Calu3 (cell line): ENCODE measurements at regions of chr3 and their contacts with region 1.

Region 1: GRCh38 chr3:150314248-150315004 is 93.7 kb upstream of the TSC22D2 start:
- DNase-seq: peak; percentile 84
- H3K4me3 Mint-ChIP-seq: peak overlapping the region; percentile 38
- H3K27ac Mint-ChIP-seq: peak overlapping the region; percentile 90
- H3K4me1 Mint-ChIP-seq: peaks cover 81% of the 10 kb centered on the region
- H3K27me3 Mint-ChIP-seq: no peaks in the 10 kb centered on the region
- CTCF ChIP-seq: no peak

Region 2: DNA sequence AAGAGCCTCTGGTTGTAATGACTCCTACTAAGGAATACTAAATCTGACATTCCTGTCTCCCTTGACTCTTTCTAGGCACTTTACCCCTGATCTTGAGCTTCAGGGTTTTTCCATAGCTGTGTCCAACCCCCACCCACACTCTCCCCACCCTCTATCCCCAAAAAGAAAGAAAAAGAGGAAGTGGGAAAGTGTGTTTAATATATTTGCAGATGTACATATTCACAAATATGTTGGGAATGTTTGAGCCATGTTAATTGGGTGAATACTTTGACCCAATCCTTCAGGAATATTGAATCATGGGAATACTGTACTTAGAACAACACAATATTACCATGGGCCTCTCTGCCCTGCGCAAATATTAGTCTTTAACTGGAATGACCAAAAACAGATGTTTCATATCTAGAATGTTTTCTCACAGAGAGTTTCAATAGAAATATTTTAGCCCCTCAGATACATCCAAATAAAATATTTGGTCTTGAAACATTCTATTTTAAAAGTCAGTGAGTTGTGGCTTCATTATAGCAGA is 323.9 kb before region 1 on chr3:
- CTCF ChIA-PET with region 1: no interaction called
- intact Hi-C with region 1: no loop called
- DNase-seq: no peak
- H3K4me3 Mint-ChIP-seq: no peak overlapping the region
- H3K27ac Mint-ChIP-seq: no peak overlapping the region
- H3K4me1 Mint-ChIP-seq: no peaks in the 10 kb centered on the region
- H3K27me3 Mint-ChIP-seq: no peaks in the 10 kb centered on the region
- CTCF ChIP-seq: no peak

Region 3: DNA sequence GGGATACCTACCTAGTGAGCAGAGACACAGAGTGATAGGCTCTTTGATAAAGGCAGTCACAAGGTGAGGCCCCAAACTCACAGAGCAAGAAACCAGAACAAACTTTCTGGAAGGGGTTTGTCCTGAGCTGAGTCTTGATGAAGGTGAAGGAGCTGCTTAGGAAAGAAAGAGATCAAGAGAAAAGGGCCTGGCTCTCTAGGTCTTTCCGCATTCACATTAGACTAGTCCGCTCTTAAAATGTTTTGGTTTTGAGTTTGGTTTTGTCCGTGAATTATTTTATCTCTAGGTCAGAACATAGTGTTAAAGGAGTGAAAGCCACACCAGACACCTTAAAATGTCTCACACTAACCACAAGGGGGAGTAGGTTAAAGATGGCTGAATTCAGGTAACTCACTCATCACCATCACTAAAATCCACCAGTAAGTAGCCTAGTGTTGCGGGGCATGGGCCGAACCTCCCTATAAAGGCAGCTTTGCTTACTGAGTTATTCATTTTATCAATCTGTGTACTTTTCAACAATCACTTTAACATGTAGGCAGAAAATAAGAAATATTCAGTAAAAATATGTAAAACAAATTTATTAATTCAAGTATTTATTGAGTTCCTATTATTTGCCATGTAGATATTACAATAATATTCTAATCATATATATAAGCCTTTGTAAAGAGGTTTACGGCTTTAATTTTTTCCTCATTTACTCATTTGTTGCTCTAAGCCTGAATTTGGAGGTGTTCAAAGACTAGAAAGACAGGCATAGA is 27.9 kb before region 1 on chr3:
- CTCF ChIA-PET with region 1: interaction called, 10 read pairs
- intact Hi-C with region 1: no loop called
- DNase-seq: peak; percentile 45
- H3K4me3 Mint-ChIP-seq: no peak overlapping the region
- H3K27ac Mint-ChIP-seq: no peak overlapping the region
- H3K4me1 Mint-ChIP-seq: peaks cover 7% of the 10 kb centered on the region
- H3K27me3 Mint-ChIP-seq: no peaks in the 10 kb centered on the region
- CTCF ChIP-seq: peak; percentile 69

Region 4: DNA sequence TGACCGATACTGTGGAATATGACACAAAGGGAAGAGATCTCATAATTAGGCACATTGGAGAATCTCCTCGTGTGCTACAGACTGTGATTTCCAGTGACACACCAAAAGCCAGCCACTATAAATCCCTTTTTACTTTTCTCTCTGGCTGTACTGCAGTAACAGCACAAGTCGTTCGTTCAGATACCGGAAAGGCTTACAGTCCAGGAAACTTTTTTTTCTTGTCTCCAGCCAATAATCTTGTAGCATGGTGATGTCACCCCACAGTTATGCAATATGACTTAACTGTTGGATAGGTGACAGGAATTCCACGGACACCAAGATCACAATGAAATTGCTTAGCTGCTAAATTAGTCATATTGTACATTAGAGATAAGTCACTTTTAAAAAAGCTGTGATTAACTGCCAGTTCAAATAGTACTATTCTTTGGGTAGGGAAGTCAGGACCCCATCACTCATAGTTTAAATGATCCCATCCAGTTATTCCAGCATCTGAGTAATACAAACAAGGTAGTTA is 57.4 kb after region 1 on chr3:
- CTCF ChIA-PET with region 1: interaction called, 7 read pairs
- intact Hi-C with region 1: loop called (anchors 2 kb)
- DNase-seq: peak; percentile 91
- H3K4me3 Mint-ChIP-seq: peak overlapping the region; percentile 62
- H3K27ac Mint-ChIP-seq: peak overlapping the region; percentile 94
- H3K4me1 Mint-ChIP-seq: peaks cover 63% of the 10 kb centered on the region
- H3K27me3 Mint-ChIP-seq: no peaks in the 10 kb centered on the region
- CTCF ChIP-seq: no peak

Region 5: GRCh38 chr3:150775091-150775501 is 460.7 kb after region 1 on chr3:
- CTCF ChIA-PET with region 1: no interaction called
- intact Hi-C with region 1: no loop called
- DNase-seq: no peak
- H3K4me3 Mint-ChIP-seq: no peak overlapping the region
- H3K27ac Mint-ChIP-seq: no peak overlapping the region
- H3K4me1 Mint-ChIP-seq: peaks cover 15% of the 10 kb centered on the region
- H3K27me3 Mint-ChIP-seq: no peaks in the 10 kb centered on the region
- CTCF ChIP-seq: no peak